ENCODE measurements at regions of chr1 and their contacts with region 1.

Region 1: GRCh38 chr1:221708987-221709386 is 32.9 kb downstream of the DUSP10 start:
- DNase-seq: peak; percentile 63
- H3K4me3 Mint-ChIP-seq: peak overlapping the region; percentile 26
- H3K27ac Mint-ChIP-seq: peak overlapping the region; percentile 86
- H3K4me1 Mint-ChIP-seq: peaks cover 60% of the 10 kb centered on the region
- H3K27me3 Mint-ChIP-seq: no peaks in the 10 kb centered on the region

Region 2: GRCh38 chr1:220241072-220241663 is 1467.8 kb before region 1 on chr1:
- CTCF ChIA-PET with region 1: no interaction called
- POLR2A ChIA-PET with region 1: no interaction called
- intact Hi-C with region 1: loop called (anchors 2 kb)
- DNase-seq: no peak
- H3K4me3 Mint-ChIP-seq: no peak overlapping the region
- H3K27ac Mint-ChIP-seq: no peak overlapping the region
- H3K4me1 Mint-ChIP-seq: peaks cover 40% of the 10 kb centered on the region
- H3K27me3 Mint-ChIP-seq: no peaks in the 10 kb centered on the region

Region 3: GRCh38 chr1:221697923-221698425 is 11.0 kb before region 1 on chr1:
- CTCF ChIA-PET with region 1: interaction called, 3 read pairs
- POLR2A ChIA-PET with region 1: interaction called, 5 read pairs
- intact Hi-C with region 1: loop called (anchors 1 kb)
- DNase-seq: no peak
- H3K4me3 Mint-ChIP-seq: no peak overlapping the region
- H3K27ac Mint-ChIP-seq: no peak overlapping the region
- H3K4me1 Mint-ChIP-seq: peaks cover 15% of the 10 kb centered on the region
- H3K27me3 Mint-ChIP-seq: no peaks in the 10 kb centered on the region

Region 4: GRCh38 chr1:221725735-221726672 is 17.0 kb after region 1 on chr1:
- CTCF ChIA-PET with region 1: interaction called, 5 read pairs
- POLR2A ChIA-PET with region 1: interaction called, 7 read pairs
- intact Hi-C with region 1: loop called (anchors 1 kb)
- DNase-seq: no peak
- H3K4me3 Mint-ChIP-seq: peak overlapping the region; percentile 59
- H3K27ac Mint-ChIP-seq: peak overlapping the region; percentile 96
- H3K4me1 Mint-ChIP-seq: peaks cover 80% of the 10 kb centered on the region
- H3K27me3 Mint-ChIP-seq: no peaks in the 10 kb centered on the region

Region 5: DNA sequence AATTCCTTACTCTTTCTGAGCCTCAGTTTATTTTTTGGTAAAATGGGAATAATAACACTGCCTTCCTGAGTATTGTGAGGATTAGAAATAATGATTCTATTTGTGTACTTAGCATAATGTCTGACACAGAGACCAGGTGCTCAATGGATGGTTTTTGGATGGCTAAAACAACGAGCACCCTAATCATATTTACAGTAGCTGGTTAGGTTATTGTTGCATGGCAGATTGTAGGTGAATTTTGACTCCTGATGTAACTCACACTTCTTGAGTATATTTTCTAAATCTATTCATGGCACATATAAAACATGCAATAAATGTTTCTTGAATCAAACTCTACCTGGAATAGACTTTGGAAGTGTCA is 44.8 kb after region 1 on chr1:
- CTCF ChIA-PET with region 1: no interaction called
- POLR2A ChIA-PET with region 1: no interaction called
- intact Hi-C with region 1: loop called (anchors 1 kb)
- DNase-seq: no peak
- H3K4me3 Mint-ChIP-seq: no peak overlapping the region
- H3K27ac Mint-ChIP-seq: peak overlapping the region; percentile 19
- H3K4me1 Mint-ChIP-seq: peaks cover 33% of the 10 kb centered on the region
- H3K27me3 Mint-ChIP-seq: no peaks in the 10 kb centered on the region

Region 6: DNA sequence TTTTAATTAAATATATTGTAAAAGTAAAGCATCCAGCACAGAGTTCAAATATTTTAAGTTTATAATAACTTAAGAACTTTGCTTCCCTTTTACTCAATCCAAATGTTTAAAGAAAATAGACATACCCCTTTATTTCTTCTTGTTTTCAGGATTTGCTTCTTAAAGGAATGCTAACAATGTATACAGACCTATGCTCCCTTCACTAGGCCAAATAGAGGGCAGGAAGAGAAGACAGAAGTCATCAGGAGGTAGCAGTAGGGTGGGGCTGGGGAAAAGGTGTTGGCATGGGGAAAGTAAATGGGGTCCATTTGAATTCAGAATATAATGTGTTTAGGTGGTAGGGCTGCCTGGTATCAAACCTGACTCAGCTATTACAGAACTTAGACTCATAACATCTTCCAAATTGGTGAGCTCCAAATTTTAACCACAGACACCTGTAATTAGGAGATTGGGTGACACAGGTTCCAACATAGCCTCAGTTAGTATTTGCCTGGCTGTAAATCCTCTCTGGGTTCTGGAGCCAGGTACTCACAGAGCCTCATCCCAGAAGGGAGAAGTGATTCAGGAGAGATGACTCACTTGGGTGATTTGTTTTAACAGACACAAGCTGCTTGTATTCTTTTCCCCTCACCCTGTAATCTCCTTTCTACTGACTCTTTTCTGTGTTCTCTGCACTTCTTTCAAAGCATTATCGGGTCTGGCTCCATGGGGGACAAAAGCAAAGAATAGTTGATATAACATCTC is 93.0 kb after region 1 on chr1:
- CTCF ChIA-PET with region 1: no interaction called
- POLR2A ChIA-PET with region 1: no interaction called
- intact Hi-C with region 1: no loop called
- DNase-seq: no peak
- H3K4me3 Mint-ChIP-seq: no peak overlapping the region
- H3K27ac Mint-ChIP-seq: no peak overlapping the region
- H3K4me1 Mint-ChIP-seq: peaks cover 16% of the 10 kb centered on the region
- H3K27me3 Mint-ChIP-seq: no peaks in the 10 kb centered on the region

Region 7: DNA sequence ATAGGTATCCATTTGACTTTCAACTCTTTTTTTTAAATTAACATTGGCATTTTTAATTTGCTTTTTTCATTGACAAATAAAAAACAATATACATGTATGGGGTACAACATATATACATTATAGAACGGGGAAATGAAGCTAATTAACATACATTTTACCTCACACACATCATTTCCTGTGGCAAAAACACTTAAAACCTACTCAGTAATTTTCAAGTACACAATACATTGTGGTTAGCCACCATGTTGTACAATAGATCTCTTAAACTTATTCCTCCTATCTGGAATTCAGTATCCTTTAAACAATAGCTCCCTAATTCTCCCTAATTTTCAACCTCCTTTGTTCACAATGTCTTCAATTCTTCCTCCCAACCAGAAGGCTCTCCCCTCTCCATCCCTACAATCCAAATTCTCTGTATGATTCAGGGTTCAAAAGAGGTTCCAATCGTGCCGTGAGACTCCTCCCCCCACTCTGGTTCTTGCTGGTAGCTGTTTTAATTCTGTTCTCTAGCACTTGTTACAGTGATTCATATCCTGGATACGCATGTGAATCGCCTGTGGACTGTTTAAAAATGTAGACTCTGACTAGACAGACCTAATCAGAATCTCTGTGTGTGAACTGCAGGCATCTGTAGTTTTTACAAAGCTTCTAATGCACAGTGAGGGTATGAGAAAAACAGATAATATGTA is 120.5 kb after region 1 on chr1:
- CTCF ChIA-PET with region 1: no interaction called
- POLR2A ChIA-PET with region 1: interaction called, 3 read pairs
- intact Hi-C with region 1: loop called (anchors 1 kb)
- DNase-seq: peak; percentile 83
- H3K4me3 Mint-ChIP-seq: peak overlapping the region; percentile 30
- H3K27ac Mint-ChIP-seq: peak overlapping the region; percentile 90
- H3K4me1 Mint-ChIP-seq: peaks cover 53% of the 10 kb centered on the region
- H3K27me3 Mint-ChIP-seq: no peaks in the 10 kb centered on the region

Region 8: GRCh38 chr1:222009105-222009730 is 300.2 kb after region 1 on chr1:
- CTCF ChIA-PET with region 1: no interaction called
- POLR2A ChIA-PET with region 1: no interaction called
- intact Hi-C with region 1: no loop called
- DNase-seq: peak; percentile 27
- H3K4me3 Mint-ChIP-seq: no peak overlapping the region
- H3K27ac Mint-ChIP-seq: no peak overlapping the region
- H3K4me1 Mint-ChIP-seq: no peaks in the 10 kb centered on the region
- H3K27me3 Mint-ChIP-seq: no peaks in the 10 kb centered on the region

Measured in activated CD4-positive, alpha-beta memory T cell treated with anti-CD3 and anti-CD28 coated beads for 36 hours (primary cell).